ENCODE measurements at regions of chr2 and their contacts with region 1.

Region 1: GRCh38 chr2:222860740-222861410 is at the start of gene ACSL3:
- DNase-seq: peak; percentile 98
- H3K4me3 Mint-ChIP-seq: no peak within 1 kb of the TSS
- H3K27ac Mint-ChIP-seq: peak within 1 kb of the TSS; percentile 47
- H3K4me1 Mint-ChIP-seq: no peaks in the 10 kb centered on the region
- H3K27me3 Mint-ChIP-seq: no peaks in the 10 kb centered on the region
- CTCF ChIP-seq: no peak
- total RNA-seq, gene ACSL3: 167 and 168 TPM in 2 replicates

Region 2: DNA sequence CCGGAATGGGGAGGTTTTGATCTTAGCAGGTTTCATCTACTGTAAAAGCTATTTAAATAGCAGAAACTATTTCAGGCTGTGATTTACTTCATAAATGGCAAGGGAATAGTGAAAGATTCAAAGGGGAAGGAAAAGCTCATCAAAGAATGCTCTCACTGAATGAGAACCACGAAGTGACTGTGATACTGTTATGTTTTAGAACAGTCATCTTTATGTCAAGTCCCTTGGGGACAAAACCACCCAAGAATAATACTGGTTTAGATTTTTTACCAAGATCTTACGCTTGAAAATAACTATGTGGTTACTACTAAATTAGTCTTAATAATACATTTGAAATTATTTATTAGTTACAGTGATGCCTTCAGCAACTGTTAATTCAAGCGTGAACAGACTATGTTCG is 233.1 kb before region 1 on chr2:
- CTCF ChIA-PET with region 1: no interaction called
- intact Hi-C with region 1: no loop called
- DNase-seq: no peak
- H3K4me3 Mint-ChIP-seq: no peak overlapping the region
- H3K27ac Mint-ChIP-seq: no peak overlapping the region
- H3K4me1 Mint-ChIP-seq: no peaks in the 10 kb centered on the region
- H3K27me3 Mint-ChIP-seq: no peaks in the 10 kb centered on the region
- CTCF ChIP-seq: no peak

Region 3: GRCh38 chr2:222707689-222708525 is 153.0 kb before region 1 on chr2:
- CTCF ChIA-PET with region 1: interaction called, 6 read pairs
- intact Hi-C with region 1: loop called (anchors 5 kb)
- DNase-seq: peak; percentile 80
- H3K4me3 Mint-ChIP-seq: peak overlapping the region; percentile 45
- H3K27ac Mint-ChIP-seq: peak overlapping the region; percentile 63
- H3K4me1 Mint-ChIP-seq: peaks cover 33% of the 10 kb centered on the region
- H3K27me3 Mint-ChIP-seq: no peaks in the 10 kb centered on the region
- CTCF ChIP-seq: peak; percentile 93

Region 4: DNA sequence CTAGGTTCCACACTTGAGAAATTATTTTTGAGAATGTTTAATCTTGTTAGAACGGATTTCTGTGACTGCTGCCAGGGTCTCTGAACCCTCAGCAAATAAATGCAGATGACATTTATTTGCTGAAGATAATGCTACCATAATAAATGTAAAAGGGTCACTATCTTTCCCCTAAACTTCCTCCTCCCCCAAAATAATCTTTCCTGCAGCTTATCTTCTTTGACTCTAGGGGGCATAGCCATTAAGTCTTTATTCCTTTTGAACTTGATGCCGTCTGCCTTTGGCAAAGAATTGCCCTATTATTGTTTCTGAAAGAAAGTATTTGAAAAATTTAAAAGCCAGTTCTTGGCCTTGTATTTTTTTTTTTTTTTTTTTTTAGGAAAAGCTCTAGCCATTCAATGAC is 63.6 kb before region 1 on chr2:
- CTCF ChIA-PET with region 1: no interaction called
- intact Hi-C with region 1: loop called (anchors 2 kb)
- DNase-seq: no peak
- H3K4me3 Mint-ChIP-seq: no peak overlapping the region
- H3K27ac Mint-ChIP-seq: no peak overlapping the region
- H3K4me1 Mint-ChIP-seq: peaks cover 19% of the 10 kb centered on the region
- H3K27me3 Mint-ChIP-seq: no peaks in the 10 kb centered on the region
- CTCF ChIP-seq: peak; percentile 39

Region 5: DNA sequence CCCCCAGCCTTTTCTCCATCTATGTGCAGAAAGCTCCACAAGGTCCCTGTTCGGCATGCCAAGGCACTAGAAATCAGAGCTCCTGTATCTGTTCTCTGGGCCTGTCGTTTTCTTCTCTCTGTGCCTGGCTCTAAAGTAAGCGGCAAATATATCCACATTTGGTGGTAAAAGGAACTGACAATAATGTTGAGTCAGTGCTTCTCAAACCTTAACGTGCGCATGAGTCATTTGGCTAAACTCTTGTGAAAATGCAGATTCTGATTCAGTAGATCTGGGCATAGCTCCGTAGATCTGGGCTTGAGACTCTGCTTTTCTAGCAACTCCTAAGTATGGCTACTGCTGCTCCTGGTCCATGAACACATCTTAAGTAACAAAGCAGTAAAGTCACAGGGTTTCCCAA is 16.6 kb before region 1 on chr2:
- CTCF ChIA-PET with region 1: interaction called, 13 read pairs
- intact Hi-C with region 1: no loop called
- DNase-seq: no peak
- H3K4me3 Mint-ChIP-seq: no peak overlapping the region
- H3K27ac Mint-ChIP-seq: peak overlapping the region; percentile 14
- H3K4me1 Mint-ChIP-seq: peaks cover 54% of the 10 kb centered on the region
- H3K27me3 Mint-ChIP-seq: no peaks in the 10 kb centered on the region
- CTCF ChIP-seq: no peak

Region 6: GRCh38 chr2:222903234-222904220 is 42.7 kb after region 1 on chr2:
- CTCF ChIA-PET with region 1: interaction called, 6 read pairs
- intact Hi-C with region 1: loop called (anchors 5 kb)
- DNase-seq: peak; percentile 41
- H3K4me3 Mint-ChIP-seq: no peak overlapping the region
- H3K27ac Mint-ChIP-seq: no peak overlapping the region
- H3K4me1 Mint-ChIP-seq: peaks cover 89% of the 10 kb centered on the region
- H3K27me3 Mint-ChIP-seq: no peaks in the 10 kb centered on the region
- CTCF ChIP-seq: peak; percentile 46

Region 7: DNA sequence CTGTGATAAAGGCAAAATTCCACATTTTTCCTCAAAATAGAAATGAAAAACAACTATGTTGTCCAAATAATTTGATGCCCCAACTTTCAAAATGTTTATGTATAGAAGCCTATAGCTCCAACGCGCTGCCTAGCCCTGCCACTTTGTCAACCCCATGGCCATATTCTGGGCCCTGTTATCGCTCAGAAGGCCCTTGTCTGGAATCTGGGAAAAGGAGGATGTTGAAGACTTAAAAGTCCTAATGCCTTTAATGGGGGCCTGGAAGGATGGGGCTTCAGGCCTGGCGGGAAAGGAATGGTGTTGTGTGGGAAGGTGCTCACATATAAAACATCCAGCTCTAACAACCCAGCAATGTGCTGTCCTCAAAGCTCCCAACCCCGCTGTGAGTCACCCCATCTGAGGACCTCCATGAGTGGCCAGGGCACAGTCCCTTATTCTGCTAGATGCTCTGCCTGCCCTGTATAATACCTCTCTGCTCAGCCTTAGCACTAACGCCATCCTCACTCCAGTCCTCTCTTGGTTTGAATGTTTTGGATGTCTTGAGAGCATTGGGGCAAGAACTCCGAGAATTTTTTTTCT is 85.9 kb after region 1 on chr2:
- CTCF ChIA-PET with region 1: no interaction called
- intact Hi-C with region 1: no loop called
- DNase-seq: no peak
- H3K4me3 Mint-ChIP-seq: no peak overlapping the region
- H3K27ac Mint-ChIP-seq: no peak overlapping the region
- H3K4me1 Mint-ChIP-seq: peaks cover 23% of the 10 kb centered on the region
- H3K27me3 Mint-ChIP-seq: no peaks in the 10 kb centered on the region
- CTCF ChIP-seq: no peak

Region 8: GRCh38 chr2:223720367-223720766 is 859.5 kb after region 1 on chr2:
- CTCF ChIA-PET with region 1: no interaction called
- intact Hi-C with region 1: no loop called
- DNase-seq: no peak
- H3K4me3 Mint-ChIP-seq: no peak overlapping the region
- H3K27ac Mint-ChIP-seq: no peak overlapping the region
- H3K4me1 Mint-ChIP-seq: peaks cover 25% of the 10 kb centered on the region
- H3K27me3 Mint-ChIP-seq: no peaks in the 10 kb centered on the region
- CTCF ChIP-seq: no peak